ENCODE measurements at regions of chr11 and their contacts with region 1.

Region 1: DNA sequence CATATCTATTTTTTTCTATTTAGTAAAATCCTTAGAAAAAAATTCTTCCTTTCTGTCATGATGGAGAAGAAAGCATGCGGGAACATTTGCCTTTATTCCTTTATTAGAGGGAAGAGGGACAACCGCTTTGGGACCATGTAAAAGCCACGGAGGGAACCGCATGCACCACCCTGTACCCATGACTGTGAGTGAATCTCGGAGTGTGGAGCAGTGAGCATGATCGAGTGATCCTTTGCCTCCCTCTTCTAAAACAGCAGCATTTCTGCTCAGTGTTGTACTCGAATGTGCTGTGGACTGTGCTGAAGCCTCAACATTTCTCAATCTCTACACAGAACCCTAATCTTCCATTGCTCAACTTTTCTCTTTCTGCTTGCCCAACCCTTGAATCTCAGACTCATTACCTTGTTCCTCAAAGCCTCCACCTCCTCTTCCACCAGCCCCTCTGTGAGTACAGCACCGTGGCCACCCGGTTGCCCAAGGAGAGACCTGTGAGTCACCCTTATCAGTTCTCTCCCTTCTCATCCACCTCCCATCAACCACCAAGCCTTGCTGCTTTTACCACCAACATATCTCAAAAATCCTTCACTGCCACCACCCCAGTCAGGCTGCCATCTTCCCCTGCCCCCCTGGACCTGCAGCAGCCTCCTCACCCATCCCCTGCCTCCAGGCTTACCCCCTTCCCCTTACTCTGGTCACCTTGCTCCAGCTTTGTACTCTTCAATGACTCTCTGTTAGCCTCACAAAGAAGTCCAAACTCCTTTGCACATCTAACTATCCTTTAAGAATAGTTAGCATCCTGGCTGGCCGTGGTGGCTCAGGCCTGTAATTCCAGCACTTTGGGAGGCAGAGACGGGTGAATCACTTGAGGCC is 103.1 kb downstream of the NAT10 start:
- DNase-seq: peak; percentile 82
- H3K4me3 ChIP-seq: no peak overlapping the region
- H3K27ac ChIP-seq: no peak overlapping the region
- H3K4me1 ChIP-seq: peaks cover 19% of the 10 kb centered on the region
- H3K27me3 ChIP-seq: no peaks in the 10 kb centered on the region
- CTCF ChIP-seq: no peak

Region 2: GRCh38 chr11:34075178-34075820 is 133.2 kb before region 1 on chr11:
- CTCF ChIA-PET with region 1: no interaction called
- dilution Hi-C with region 1: no loop called
- in situ Hi-C with region 1: no loop called
- intact Hi-C with region 1: no loop called
- DNase-seq: peak; percentile 83
- H3K4me3 ChIP-seq: no peak overlapping the region
- H3K27ac ChIP-seq: peak overlapping the region; percentile 86
- H3K4me1 ChIP-seq: peaks cover 30% of the 10 kb centered on the region
- H3K27me3 ChIP-seq: no peaks in the 10 kb centered on the region
- CTCF ChIP-seq: no peak

Region 3: GRCh38 chr11:34266090-34266912 is 57.8 kb after region 1 on chr11:
- CTCF ChIA-PET with region 1: no interaction called
- dilution Hi-C with region 1: no loop called
- in situ Hi-C with region 1: no loop called
- intact Hi-C with region 1: loop called (anchors 5 kb)
- DNase-seq: peak; percentile 92
- H3K4me3 ChIP-seq: no peak overlapping the region
- H3K27ac ChIP-seq: no peak overlapping the region
- H3K4me1 ChIP-seq: peaks cover 25% of the 10 kb centered on the region
- H3K27me3 ChIP-seq: no peaks in the 10 kb centered on the region
- CTCF ChIP-seq: no peak

Region 4: DNA sequence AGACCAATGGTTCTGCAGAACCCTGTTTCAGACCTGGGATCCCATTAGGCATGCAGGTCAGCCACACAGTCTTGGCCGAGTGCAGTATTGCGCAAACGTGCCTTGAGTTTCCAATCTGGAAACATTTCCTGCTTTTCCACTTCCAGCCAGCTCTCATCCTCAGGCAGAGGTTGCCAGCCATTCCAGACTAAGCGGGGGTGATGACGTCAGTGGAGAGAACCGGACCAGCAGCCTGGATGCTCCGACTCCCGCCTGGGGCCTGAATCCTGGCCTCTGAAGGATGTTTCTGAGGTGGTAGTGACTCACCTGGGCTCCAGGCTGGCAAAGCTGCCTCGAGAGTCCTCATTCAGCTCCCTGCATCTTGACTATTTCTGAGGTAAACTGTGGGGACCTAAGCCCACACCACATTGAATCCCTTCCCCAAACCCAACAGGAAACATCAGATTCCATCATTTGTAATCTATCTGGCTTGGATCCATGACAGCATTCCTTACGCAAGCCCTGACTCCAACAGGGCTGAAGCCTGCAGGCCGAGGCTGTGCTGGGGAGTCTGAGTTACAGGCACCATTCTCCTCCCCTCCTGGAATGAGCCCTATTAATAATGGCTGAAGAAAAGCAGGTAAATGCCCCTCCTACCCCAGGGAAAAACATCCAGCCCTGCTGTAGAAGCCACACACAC is 66.4 kb after region 1 on chr11:
- CTCF ChIA-PET with region 1: no interaction called
- dilution Hi-C with region 1: no loop called
- in situ Hi-C with region 1: no loop called
- intact Hi-C with region 1: loop called (anchors 1 kb)
- DNase-seq: peak; percentile 99
- H3K4me3 ChIP-seq: no peak overlapping the region
- H3K27ac ChIP-seq: peak overlapping the region; percentile 45
- H3K4me1 ChIP-seq: peaks cover 18% of the 10 kb centered on the region
- H3K27me3 ChIP-seq: no peaks in the 10 kb centered on the region
- CTCF ChIP-seq: no peak

Region 5: GRCh38 chr11:34308913-34309585 is 100.5 kb after region 1 on chr11:
- CTCF ChIA-PET with region 1: no interaction called
- dilution Hi-C with region 1: loop called (anchors 5 kb)
- in situ Hi-C with region 1: no loop called
- intact Hi-C with region 1: no loop called
- DNase-seq: no peak
- H3K4me3 ChIP-seq: no peak overlapping the region
- H3K27ac ChIP-seq: no peak overlapping the region
- H3K4me1 ChIP-seq: peaks cover 14% of the 10 kb centered on the region
- H3K27me3 ChIP-seq: no peaks in the 10 kb centered on the region
- CTCF ChIP-seq: no peak

Measured in mammary epithelial cell (primary cell).